Activated CD4-positive, alpha-beta T cell treated with anti-CD3 and anti-CD28 coated beads for 36 hours (primary cell): ENCODE measurements at regions of chr15 and their contacts with region 1.

Region 1: DNA sequence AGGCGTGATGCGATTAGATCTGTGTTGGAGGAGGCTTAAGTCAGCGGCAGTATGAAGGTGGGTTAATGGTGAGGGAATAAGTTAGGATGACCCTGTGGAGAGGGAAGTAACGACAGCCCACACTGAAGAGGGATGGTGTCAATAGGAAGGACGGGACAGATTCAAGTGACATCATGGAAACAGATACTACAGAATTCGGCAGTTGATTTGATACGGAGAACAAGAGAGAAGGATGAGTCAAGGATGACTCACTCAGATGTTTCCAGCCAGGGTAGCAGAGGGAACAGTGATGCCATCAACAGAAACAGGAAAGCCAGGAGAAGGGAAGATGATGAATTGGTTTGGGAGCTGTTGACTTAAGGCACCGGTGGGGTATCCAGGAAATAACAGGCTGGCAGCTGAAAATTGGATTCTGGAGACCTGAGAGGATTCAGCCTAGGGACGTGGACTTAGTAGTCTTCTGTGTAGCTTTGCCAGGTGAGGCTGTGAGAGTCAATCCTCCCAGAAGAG is 38.0 kb downstream of the SHC4 start:
- DNase-seq: peak; percentile 30
- ATAC-seq: peak; percentile 50
- H3K4me3 Mint-ChIP-seq: peak overlapping the region; percentile 15
- H3K27ac Mint-ChIP-seq: peak overlapping the region; percentile 65
- H3K4me1 Mint-ChIP-seq: peaks cover 57% of the 10 kb centered on the region
- H3K27me3 Mint-ChIP-seq: peaks cover 20% of the 10 kb centered on the region

Region 2: GRCh38 chr15:48905847-48906246 is 19.9 kb before region 1 on chr15:
- CTCF ChIA-PET with region 1: no interaction called
- POLR2A ChIA-PET with region 1: no interaction called
- intact Hi-C with region 1: loop called in 1 of 2 experiments (anchors 2 kb)
- DNase-seq: no peak
- ATAC-seq: peak; percentile 39
- H3K4me3 Mint-ChIP-seq: no peak overlapping the region
- H3K27ac Mint-ChIP-seq: no peak overlapping the region
- H3K4me1 Mint-ChIP-seq: peaks cover 19% of the 10 kb centered on the region
- H3K27me3 Mint-ChIP-seq: peaks cover 3% of the 10 kb centered on the region

Region 3: GRCh38 chr15:48940448-48940893 is 14.7 kb after region 1 on chr15:
- CTCF ChIA-PET with region 1: interaction called, 5 read pairs
- POLR2A ChIA-PET with region 1: no interaction called
- intact Hi-C with region 1: loop called in 1 of 2 experiments (anchors 1 kb)
- DNase-seq: peak; percentile 31
- ATAC-seq: peak; percentile 83
- H3K4me3 Mint-ChIP-seq: no peak overlapping the region
- H3K27ac Mint-ChIP-seq: no peak overlapping the region
- H3K4me1 Mint-ChIP-seq: peaks cover 10% of the 10 kb centered on the region
- H3K27me3 Mint-ChIP-seq: peaks cover 35% of the 10 kb centered on the region

Region 4: GRCh38 chr15:48946088-48946839 is 20.5 kb after region 1 on chr15:
- CTCF ChIA-PET with region 1: interaction called, 3 read pairs
- POLR2A ChIA-PET with region 1: no interaction called
- intact Hi-C with region 1: loop called in 1 of 2 experiments (anchors 2 kb)
- DNase-seq: no peak
- ATAC-seq: peak; percentile 93
- H3K4me3 Mint-ChIP-seq: no peak overlapping the region
- H3K27ac Mint-ChIP-seq: peak overlapping the region; percentile 7
- H3K4me1 Mint-ChIP-seq: peaks cover 13% of the 10 kb centered on the region
- H3K27me3 Mint-ChIP-seq: peaks cover 20% of the 10 kb centered on the region

Region 5: DNA sequence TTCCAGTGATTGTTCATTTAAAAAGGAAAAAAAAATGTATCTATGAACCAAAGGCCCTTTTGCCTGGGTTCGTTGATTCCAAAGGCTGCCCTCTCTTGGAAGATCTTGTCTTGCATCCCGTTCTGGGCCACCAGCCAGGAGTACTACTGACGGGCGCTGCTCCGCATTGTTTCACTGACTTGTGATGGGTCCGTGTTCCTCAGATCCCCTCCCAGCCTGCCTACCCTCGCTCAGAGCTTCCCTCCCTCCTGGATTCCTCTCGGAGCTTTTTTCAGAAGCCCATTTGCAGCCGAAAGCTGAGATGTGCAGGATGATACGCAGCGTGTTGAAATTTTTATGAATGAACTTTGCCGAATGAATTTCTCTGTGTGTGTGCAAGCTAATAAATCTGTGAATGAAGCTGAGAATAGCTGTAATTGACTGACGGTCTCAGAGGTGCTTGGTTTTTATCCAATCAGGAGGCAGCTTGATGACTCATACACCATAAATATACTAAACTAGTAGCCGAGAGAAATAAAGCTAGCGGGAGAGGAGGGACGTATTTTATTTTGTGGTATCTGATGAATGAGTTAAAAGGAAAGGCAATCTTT is 37.9 kb after region 1 on chr15 and contains the start of gene SHC4:
- CTCF ChIA-PET with region 1: no interaction called
- POLR2A ChIA-PET with region 1: interaction called, 3 read pairs
- intact Hi-C with region 1: loop called (anchors 1 to 5 kb)
- DNase-seq: peak; percentile 29
- ATAC-seq: peak; percentile 45
- H3K4me3 Mint-ChIP-seq: peak within 1 kb of the TSS; percentile 69
- H3K27ac Mint-ChIP-seq: peak within 1 kb of the TSS; percentile 84
- H3K4me1 Mint-ChIP-seq: peaks cover 34% of the 10 kb centered on the region
- H3K27me3 Mint-ChIP-seq: peaks cover 38% of the 10 kb centered on the region
- total RNA-seq, gene SHC4: 1.4 TPM

Region 6: DNA sequence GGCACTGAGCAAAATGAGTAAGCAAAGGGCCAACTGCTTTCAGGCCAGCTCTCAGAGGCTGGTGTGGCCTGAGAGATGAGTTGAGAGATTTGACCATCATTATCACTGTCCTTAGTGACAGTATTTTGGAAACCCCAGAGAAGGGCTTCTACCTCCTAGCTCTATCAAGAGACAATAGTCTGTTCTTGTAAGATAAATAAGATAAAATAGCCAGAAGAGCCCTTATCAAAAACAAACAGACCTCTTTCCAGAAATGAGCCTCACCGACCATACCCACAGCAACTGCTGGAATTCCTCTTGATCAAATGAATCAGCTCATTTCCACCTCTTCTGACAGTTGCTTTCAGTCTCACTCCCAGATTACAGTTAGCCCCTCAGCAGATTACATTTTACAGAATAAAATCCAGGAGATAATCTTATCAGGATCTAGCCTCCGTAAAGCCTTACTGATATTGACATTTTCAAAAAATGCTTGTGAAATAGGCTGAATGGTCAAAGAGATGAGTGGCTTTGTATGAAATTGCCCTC is 1335.3 kb after region 1 on chr15:
- CTCF ChIA-PET with region 1: no interaction called
- POLR2A ChIA-PET with region 1: no interaction called
- intact Hi-C with region 1: loop called in 1 of 2 experiments (anchors 5 kb)
- DNase-seq: no peak
- ATAC-seq: peak; percentile 17
- H3K4me3 Mint-ChIP-seq: peak overlapping the region; percentile 37
- H3K27ac Mint-ChIP-seq: peak overlapping the region; percentile 95
- H3K4me1 Mint-ChIP-seq: peaks cover 69% of the 10 kb centered on the region
- H3K27me3 Mint-ChIP-seq: no peaks in the 10 kb centered on the region